H1 (cell line): ENCODE measurements at regions of chr2 and their contacts with region 1.

Region 1: GRCh38 chr2:30711646-30712085 is 95.6 kb downstream of the CAPN13 start:
- DNase-seq: peak; percentile 68 to 93
- H3K4me3 ChIP-seq: no peak overlapping the region
- H3K27ac ChIP-seq: no peak overlapping the region
- H3K4me1 ChIP-seq: no peaks in the 10 kb centered on the region
- H3K27me3 ChIP-seq: no peaks in the 10 kb centered on the region
- CTCF ChIP-seq: peak; percentile 95 to 100 (median 100)
- EP300 ChIP-seq: no peak
- POLR2A ChIP-seq: no peak
- RAD21 ChIP-seq: peak; percentile 91 to 94

Region 2: GRCh38 chr2:30208452-30208851 is 503.2 kb before region 1 on chr2:
- CTCF ChIA-PET with region 1: interaction called, 143 read pairs
- POLR2A ChIA-PET with region 1: no interaction called
- DNase-seq: peak; percentile 57 to 77
- H3K4me3 ChIP-seq: no peak overlapping the region
- H3K27ac ChIP-seq: no peak overlapping the region
- H3K4me1 ChIP-seq: peaks cover 0 to 4% (median 2%) of the 10 kb centered on the region in 4 experiments; a peak in 3 of 7 replicates
- H3K27me3 ChIP-seq: no peaks in the 10 kb centered on the region
- CTCF ChIP-seq: peak; percentile 68 to 89 (median 86)
- EP300 ChIP-seq: no peak
- POLR2A ChIP-seq: no peak
- RAD21 ChIP-seq: peak; percentile 98 to 99

Region 3: DNA sequence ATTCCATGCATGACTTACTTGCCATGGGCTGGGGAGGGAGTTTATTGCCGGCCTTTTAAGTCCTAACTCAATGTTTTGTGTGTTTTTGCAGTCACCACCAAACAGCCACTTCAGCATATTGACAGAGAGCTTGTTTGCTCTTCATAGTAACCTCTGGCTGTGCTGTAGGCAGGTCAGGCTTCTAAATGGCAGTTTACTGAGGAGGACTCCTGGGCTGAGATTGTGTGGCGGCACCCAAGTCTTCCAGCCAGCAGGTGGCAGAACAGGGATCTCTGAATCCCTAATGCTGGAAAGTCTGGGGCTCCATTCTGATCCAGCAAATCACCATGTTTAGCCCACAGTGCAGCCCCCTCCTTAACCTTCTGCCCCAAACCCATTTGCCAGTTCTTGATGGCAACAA is 25.7 kb before region 1 on chr2:
- CTCF ChIA-PET with region 1: interaction called, 217 read pairs
- POLR2A ChIA-PET with region 1: no interaction called
- DNase-seq: peak in 1 of 2 experiments; percentile 56
- H3K4me3 ChIP-seq: no peak overlapping the region
- H3K27ac ChIP-seq: no peak overlapping the region
- H3K4me1 ChIP-seq: no peaks in the 10 kb centered on the region
- H3K27me3 ChIP-seq: no peaks in the 10 kb centered on the region
- CTCF ChIP-seq: peak; percentile 47 to 65 (median 58)
- EP300 ChIP-seq: no peak
- POLR2A ChIP-seq: no peak
- RAD21 ChIP-seq: peak; percentile 34 to 48; a peak in 2 of 4 replicates

Region 4: DNA sequence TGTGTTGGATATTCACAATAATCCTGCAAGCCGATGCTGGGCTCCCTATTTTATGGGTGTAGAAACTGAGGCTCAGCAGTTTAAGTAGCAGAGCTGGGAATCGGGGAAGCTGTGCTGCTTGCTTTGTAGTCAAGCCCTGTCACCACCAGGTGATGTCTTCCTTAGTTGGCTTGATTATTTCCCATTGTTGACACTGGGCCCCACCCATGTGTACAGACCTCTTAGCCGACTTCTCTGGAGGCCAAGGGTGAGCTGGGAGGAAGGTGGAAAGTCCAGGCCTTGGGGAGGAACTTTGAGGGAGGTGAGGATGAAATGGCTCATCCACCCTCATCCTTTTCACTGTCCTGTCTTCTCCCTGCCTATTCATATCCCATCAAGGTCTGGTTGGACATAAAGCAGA is 35.5 kb after region 1 on chr2:
- CTCF ChIA-PET with region 1: interaction called, 16 read pairs
- POLR2A ChIA-PET with region 1: no interaction called
- DNase-seq: no peak
- H3K4me3 ChIP-seq: no peak overlapping the region
- H3K27ac ChIP-seq: no peak overlapping the region
- H3K4me1 ChIP-seq: no peaks in the 10 kb centered on the region
- H3K27me3 ChIP-seq: no peaks in the 10 kb centered on the region
- CTCF ChIP-seq: no peak
- EP300 ChIP-seq: no peak
- POLR2A ChIP-seq: no peak
- RAD21 ChIP-seq: no peak

Region 5: GRCh38 chr2:30776831-30777635 is 65.4 kb after region 1 on chr2:
- CTCF ChIA-PET with region 1: no interaction called
- POLR2A ChIA-PET with region 1: no interaction called
- DNase-seq: peak in 1 of 2 experiments; percentile 33
- H3K4me3 ChIP-seq: no peak overlapping the region
- H3K27ac ChIP-seq: no peak overlapping the region
- H3K4me1 ChIP-seq: 0 out of 7 replicates have a peak, but pooled peaks cover 0 to 2% (median 0%) of the 10 kb centered on the region in 4 experiments
- H3K27me3 ChIP-seq: no peaks in the 10 kb centered on the region
- CTCF ChIP-seq: no peak
- EP300 ChIP-seq: no peak
- POLR2A ChIP-seq: no peak
- RAD21 ChIP-seq: no peak

Region 6: DNA sequence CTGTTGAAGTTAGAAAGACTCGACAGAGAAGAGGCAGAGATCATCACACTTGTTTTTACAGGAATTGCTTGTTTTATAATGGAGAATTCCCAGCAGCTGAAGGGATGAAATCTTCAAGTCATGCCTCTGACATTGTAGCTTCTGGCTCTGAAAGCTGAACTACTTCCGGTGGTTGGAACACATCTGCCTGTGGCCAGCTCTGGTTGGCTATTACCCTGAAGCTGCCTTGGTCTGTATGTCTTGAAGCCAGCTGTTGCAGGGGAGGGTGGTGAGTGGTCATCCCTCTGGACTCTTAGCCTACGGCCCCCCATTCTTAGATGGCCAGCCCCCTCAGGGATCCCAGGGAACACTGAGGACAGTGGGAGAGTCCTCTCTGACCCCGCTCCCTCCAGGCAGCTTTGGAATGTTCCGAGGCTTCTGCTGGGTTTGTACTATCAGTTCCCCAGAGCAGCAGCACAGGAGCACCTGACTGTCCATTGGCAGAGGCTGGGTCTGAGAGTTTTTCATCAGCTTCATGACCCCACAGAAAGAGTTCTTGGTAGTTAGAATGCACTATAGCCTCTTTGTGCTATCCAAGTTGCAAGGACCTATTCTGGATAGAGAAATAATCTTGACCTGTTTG is 182.9 kb after region 1 on chr2:
- CTCF ChIA-PET with region 1: interaction called, 13 read pairs
- POLR2A ChIA-PET with region 1: no interaction called
- DNase-seq: no peak
- H3K4me3 ChIP-seq: no peak overlapping the region
- H3K27ac ChIP-seq: no peak overlapping the region
- H3K4me1 ChIP-seq: no peaks in the 10 kb centered on the region; a peak in 2 of 7 replicates
- H3K27me3 ChIP-seq: no peaks in the 10 kb centered on the region
- CTCF ChIP-seq: no peak
- EP300 ChIP-seq: no peak
- POLR2A ChIP-seq: no peak
- RAD21 ChIP-seq: no peak

Region 7: GRCh38 chr2:31170071-31170698 is 458.5 kb after region 1 on chr2:
- CTCF ChIA-PET with region 1: interaction called, 117 read pairs
- POLR2A ChIA-PET with region 1: no interaction called
- DNase-seq: peak; percentile 23 to 72
- H3K4me3 ChIP-seq: no peak overlapping the region
- H3K27ac ChIP-seq: no peak overlapping the region
- H3K4me1 ChIP-seq: no peaks in the 10 kb centered on the region
- H3K27me3 ChIP-seq: no peaks in the 10 kb centered on the region
- CTCF ChIP-seq: peak; percentile 86 to 96 (median 96)
- EP300 ChIP-seq: no peak
- POLR2A ChIP-seq: no peak
- RAD21 ChIP-seq: peak; percentile 97 to 98